ENCODE measurements at regions of chr12 and their contacts with region 1.

Region 1: GRCh38 chr12:96445691-96446583 is 43.4 kb upstream of the CFAP54 start:
- DNase-seq: peak in 13 of 14 experiments; percentile 12 to 94 (median 44)
- ATAC-seq: peak; percentile 94
- H3K4me3 ChIP-seq: no peak overlapping the region
- H3K4me3 Mint-ChIP-seq: peak overlapping the region; percentile 55
- H3K27ac ChIP-seq: peak overlapping the region; percentile 74 to 92
- H3K27ac Mint-ChIP-seq: peak overlapping the region; percentile 98
- H3K4me1 ChIP-seq: peaks cover 32% of the 10 kb centered on the region
- H3K4me1 Mint-ChIP-seq: peaks cover 42% of the 10 kb centered on the region
- H3K27me3 ChIP-seq: no peaks in the 10 kb centered on the region
- H3K27me3 Mint-ChIP-seq: no peaks in the 10 kb centered on the region
- CTCF ChIP-seq: no peak

Region 2: GRCh38 chr12:96120359-96121100 is 325.4 kb before region 1 on chr12:
- CTCF ChIA-PET with region 1: no interaction called
- POLR2A ChIA-PET with region 1: no interaction called
- intact Hi-C with region 1: no loop called
- DNase-seq: peak in 3 of 14 experiments; percentile 15 to 30 (median 30)
- ATAC-seq: no peak
- H3K4me3 ChIP-seq: no peak overlapping the region
- H3K4me3 Mint-ChIP-seq: no peak overlapping the region
- H3K27ac ChIP-seq: no peak overlapping the region
- H3K27ac Mint-ChIP-seq: no peak overlapping the region
- H3K4me1 ChIP-seq: peaks cover 8% of the 10 kb centered on the region
- H3K4me1 Mint-ChIP-seq: peaks cover 6% of the 10 kb centered on the region
- H3K27me3 ChIP-seq: no peaks in the 10 kb centered on the region
- H3K27me3 Mint-ChIP-seq: no peaks in the 10 kb centered on the region
- CTCF ChIP-seq: no peak

Region 3: GRCh38 chr12:96194971-96195844 is 250.7 kb before region 1 on chr12:
- CTCF ChIA-PET with region 1: no interaction called
- POLR2A ChIA-PET with region 1: no interaction called
- intact Hi-C with region 1: loop called in 1 of 2 experiments (anchors 5 kb)
- DNase-seq: peak; percentile 47 to 95 (median 69)
- ATAC-seq: peak; percentile 72
- H3K4me3 ChIP-seq: peak overlapping the region; percentile 96
- H3K4me3 Mint-ChIP-seq: peak overlapping the region; percentile 96
- H3K27ac ChIP-seq: peak overlapping the region; percentile 85 to 98
- H3K27ac Mint-ChIP-seq: peak overlapping the region; percentile 97
- H3K4me1 ChIP-seq: peaks cover 33% of the 10 kb centered on the region
- H3K4me1 Mint-ChIP-seq: peaks cover 62% of the 10 kb centered on the region
- H3K27me3 ChIP-seq: no peaks in the 10 kb centered on the region
- H3K27me3 Mint-ChIP-seq: no peaks in the 10 kb centered on the region
- CTCF ChIP-seq: no peak

Region 4: DNA sequence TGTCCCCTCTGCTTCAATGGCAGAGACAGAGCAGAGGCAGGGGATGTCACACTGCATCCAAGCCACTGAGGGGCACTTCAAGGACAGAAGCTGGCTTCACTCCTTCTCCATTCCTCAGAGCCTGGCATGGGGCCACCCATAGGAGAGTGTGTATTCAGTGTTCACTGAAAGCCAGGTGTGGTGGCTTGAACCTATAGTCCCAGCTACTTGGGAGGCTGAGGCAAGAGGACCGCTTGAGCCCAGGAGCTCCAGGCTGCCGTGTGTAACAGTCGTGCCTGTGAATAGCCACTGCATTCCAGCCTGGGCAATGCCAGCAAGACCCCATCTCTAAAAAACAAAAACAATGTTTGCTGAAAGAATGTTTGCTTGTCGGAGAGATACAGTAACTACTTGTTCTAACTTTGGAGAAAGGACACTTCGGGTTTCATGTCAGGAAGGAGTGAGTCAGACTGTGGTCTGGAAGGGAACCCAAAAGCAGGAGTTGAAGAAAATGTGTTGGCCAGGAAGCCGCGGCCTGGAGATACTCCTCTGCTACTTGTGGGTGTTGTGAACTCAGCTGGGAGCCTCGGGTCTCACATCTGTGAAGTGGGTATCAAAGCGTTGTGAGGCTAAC is 208.4 kb before region 1 on chr12:
- CTCF ChIA-PET with region 1: no interaction called
- POLR2A ChIA-PET with region 1: interaction called, 3 read pairs
- intact Hi-C with region 1: loop called in 1 of 2 experiments (anchors 1 kb)
- DNase-seq: peak in 12 of 14 experiments; percentile 23 to 83 (median 43)
- ATAC-seq: peak; percentile 9
- H3K4me3 ChIP-seq: peak overlapping the region; percentile 4
- H3K4me3 Mint-ChIP-seq: peak overlapping the region; percentile 28
- H3K27ac ChIP-seq: peak overlapping the region; percentile 32 to 68
- H3K27ac Mint-ChIP-seq: peak overlapping the region; percentile 97
- H3K4me1 ChIP-seq: peaks cover 86% of the 10 kb centered on the region
- H3K4me1 Mint-ChIP-seq: peaks cover 79% of the 10 kb centered on the region
- H3K27me3 ChIP-seq: no peaks in the 10 kb centered on the region
- H3K27me3 Mint-ChIP-seq: no peaks in the 10 kb centered on the region
- CTCF ChIP-seq: no peak

Region 5: DNA sequence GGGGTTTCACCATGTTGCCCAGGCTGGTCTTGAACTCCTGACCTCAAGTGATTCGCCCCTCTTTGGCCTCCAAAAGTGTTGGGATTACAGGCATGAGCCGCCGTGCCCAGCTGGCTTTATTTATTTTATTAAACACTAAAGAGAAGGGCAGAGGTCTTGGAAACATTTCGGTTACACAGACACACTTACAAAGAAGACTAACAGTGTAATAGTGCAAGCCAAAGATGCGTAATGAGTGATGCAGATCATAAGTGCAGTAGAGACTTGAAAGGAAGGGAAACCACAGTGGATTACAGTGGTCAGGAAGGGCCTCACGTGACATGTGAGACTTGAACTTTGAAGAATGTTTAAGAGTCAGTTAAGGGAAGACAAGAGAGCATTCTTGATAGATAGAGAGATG is 11.8 kb before region 1 on chr12:
- CTCF ChIA-PET with region 1: interaction called, 4 read pairs
- POLR2A ChIA-PET with region 1: interaction called, 10 read pairs
- intact Hi-C with region 1: loop called in 1 of 2 experiments (anchors 1 kb)
- DNase-seq: peak; percentile 37 to 95 (median 57)
- ATAC-seq: peak; percentile 98
- H3K4me3 ChIP-seq: peak overlapping the region; percentile 6
- H3K4me3 Mint-ChIP-seq: peak overlapping the region; percentile 52
- H3K27ac ChIP-seq: peak overlapping the region; percentile 50 to 73
- H3K27ac Mint-ChIP-seq: peak overlapping the region; percentile 75
- H3K4me1 ChIP-seq: peaks cover 40% of the 10 kb centered on the region
- H3K4me1 Mint-ChIP-seq: peaks cover 26% of the 10 kb centered on the region
- H3K27me3 ChIP-seq: no peaks in the 10 kb centered on the region
- H3K27me3 Mint-ChIP-seq: no peaks in the 10 kb centered on the region
- CTCF ChIP-seq: no peak

Region 6: GRCh38 chr12:96483116-96483515 is 37.2 kb after region 1 on chr12:
- CTCF ChIA-PET with region 1: interaction called, 21 read pairs
- POLR2A ChIA-PET with region 1: interaction called, 6 read pairs
- intact Hi-C with region 1: loop called (anchors 1 to 5 kb)
- DNase-seq: no peak
- ATAC-seq: no peak
- H3K4me3 ChIP-seq: no peak overlapping the region
- H3K4me3 Mint-ChIP-seq: no peak overlapping the region
- H3K27ac ChIP-seq: no peak overlapping the region
- H3K27ac Mint-ChIP-seq: no peak overlapping the region
- H3K4me1 ChIP-seq: peaks cover 15% of the 10 kb centered on the region
- H3K4me1 Mint-ChIP-seq: peaks cover 11% of the 10 kb centered on the region
- H3K27me3 ChIP-seq: no peaks in the 10 kb centered on the region
- H3K27me3 Mint-ChIP-seq: no peaks in the 10 kb centered on the region
- CTCF ChIP-seq: no peak

Region 7: DNA sequence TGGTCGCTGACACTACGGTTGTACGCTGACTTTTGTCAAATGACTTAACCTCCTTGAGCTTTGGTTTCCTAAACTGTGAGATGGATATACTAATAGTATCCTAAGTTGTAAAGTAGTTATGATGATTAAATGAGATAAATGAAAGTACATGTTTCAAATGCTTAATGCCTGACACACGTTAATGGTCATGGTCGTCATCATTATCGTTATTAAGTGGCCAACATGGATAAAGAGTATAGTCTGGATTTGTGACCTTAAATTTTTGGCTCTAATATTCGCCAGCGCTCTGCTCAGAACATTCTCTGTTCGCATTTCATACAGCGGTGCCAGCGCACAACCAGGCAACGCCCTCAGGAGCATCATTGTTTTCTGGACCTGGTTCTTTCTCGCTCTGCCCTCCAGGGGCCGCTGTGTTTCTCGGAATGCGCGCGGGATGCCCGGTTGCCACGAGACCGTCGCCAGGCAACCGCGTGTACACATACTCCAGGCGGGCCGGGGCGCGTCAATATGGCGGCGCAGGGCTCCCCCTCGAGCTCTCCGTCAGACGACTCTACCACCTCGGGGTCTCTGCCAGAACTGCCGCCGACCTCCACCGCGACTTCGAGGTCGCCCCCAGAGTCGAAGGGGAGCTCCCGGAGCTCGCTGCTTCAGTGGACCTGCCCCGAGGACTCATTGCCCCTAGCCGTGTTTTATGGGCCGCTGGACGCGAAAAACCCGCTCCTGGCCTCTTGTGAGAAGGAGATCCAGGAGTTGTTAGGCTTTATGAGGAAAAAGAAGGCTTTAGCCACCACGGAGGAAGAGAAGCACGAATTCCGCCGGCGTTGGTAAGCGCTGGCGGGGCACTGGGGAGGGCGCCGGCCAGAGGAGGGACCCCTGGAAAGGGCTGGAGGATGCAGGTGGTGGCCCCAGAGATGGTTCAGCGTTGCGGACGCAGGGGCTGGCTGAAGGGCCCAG is 43.4 kb after region 1 on chr12 and contains the start of gene CFAP54:
- CTCF ChIA-PET with region 1: interaction called, 21 read pairs
- POLR2A ChIA-PET with region 1: interaction called, 6 read pairs
- intact Hi-C with region 1: loop called (anchors 1 to 5 kb)
- DNase-seq: peak; percentile 91 to 98 (median 94)
- ATAC-seq: peak; percentile 85
- H3K4me3 ChIP-seq: peak within 1 kb of the TSS; percentile 68
- H3K4me3 Mint-ChIP-seq: peak within 1 kb of the TSS; percentile 90
- H3K27ac ChIP-seq: no peak within 1 kb of the TSS
- H3K27ac Mint-ChIP-seq: peak within 1 kb of the TSS; percentile 80
- H3K4me1 ChIP-seq: peaks cover 28% of the 10 kb centered on the region
- H3K4me1 Mint-ChIP-seq: peaks cover 16% of the 10 kb centered on the region
- H3K27me3 ChIP-seq: no peaks in the 10 kb centered on the region
- H3K27me3 Mint-ChIP-seq: peaks cover 6% of the 10 kb centered on the region
- CTCF ChIP-seq: peak; percentile 80
- total RNA-seq, gene CFAP54: 0.20 to 0.22 TPM